Pancreas (tissue), 10 donors: ENCODE measurements at regions of chr10 and their contacts with region 1.

Region 1: GRCh38 chr10:7525314-7526016 is 114.6 kb upstream of the SFMBT2 start:
- DNase-seq: peak in 3 of 6 donors; percentile 41 to 62 (median 46)
- ATAC-seq: peak; percentile 82 to 97 (median 91)
- H3K4me3 ChIP-seq: no peak overlapping the region
- H3K27ac ChIP-seq: no peak overlapping the region
- H3K4me1 ChIP-seq: no peaks in the 10 kb centered on the region
- H3K27me3 ChIP-seq: no peaks in the 10 kb centered on the region
- CTCF ChIP-seq: peak; percentile 38 to 86 (median 60)

Region 2: DNA sequence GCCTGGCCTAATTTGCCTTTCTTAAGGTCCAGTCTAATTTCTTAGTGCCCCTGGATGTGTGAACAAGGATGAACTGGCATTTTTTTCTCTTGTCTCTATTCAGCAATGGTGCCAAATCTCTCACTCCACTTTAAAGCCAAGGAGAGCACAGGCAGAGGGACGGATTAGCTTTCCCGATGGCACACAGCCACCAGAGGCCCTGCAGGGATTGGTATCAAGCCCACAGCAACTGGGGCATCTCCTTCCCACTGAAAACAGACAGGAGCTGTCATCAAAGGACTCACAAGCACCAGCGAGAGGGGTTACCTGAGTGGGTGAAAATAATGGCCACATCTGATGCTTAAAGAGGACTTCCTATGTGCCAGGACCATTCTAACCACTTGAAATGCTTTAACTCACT is 58.2 kb after region 1 on chr10:
- intact Hi-C with region 1: no loop called
- DNase-seq: no peak
- ATAC-seq: no peak
- H3K4me3 ChIP-seq: no peak overlapping the region
- H3K27ac ChIP-seq: no peak overlapping the region
- H3K4me1 ChIP-seq: no peaks in the 10 kb centered on the region
- H3K27me3 ChIP-seq: no peaks in the 10 kb centered on the region
- CTCF ChIP-seq: no peak

Region 3: GRCh38 chr10:7687228-7687907 is 161.9 kb after region 1 on chr10:
- intact Hi-C with region 1: loop called in 2 of 3 experiments (anchors 5 kb)
- DNase-seq: peak; percentile 71 to 86 (median 78)
- ATAC-seq: peak; percentile 93 to 100 (median 98)
- H3K4me3 ChIP-seq: no peak overlapping the region
- H3K27ac ChIP-seq: no peak overlapping the region
- H3K4me1 ChIP-seq: no peaks in the 10 kb centered on the region
- H3K27me3 ChIP-seq: no peaks in the 10 kb centered on the region
- CTCF ChIP-seq: peak; percentile 65 to 84 (median 66)

Region 4: GRCh38 chr10:9294865-9295264 is 1769.4 kb after region 1 on chr10:
- intact Hi-C with region 1: loop called in 1 of 3 experiments (anchors 10 kb)
- DNase-seq: no peak
- ATAC-seq: no peak
- H3K4me3 ChIP-seq: no peak overlapping the region
- H3K27ac ChIP-seq: no peak overlapping the region
- H3K4me1 ChIP-seq: no peaks in the 10 kb centered on the region
- H3K27me3 ChIP-seq: no peaks in the 10 kb centered on the region
- CTCF ChIP-seq: no peak